Activated CD4-positive, alpha-beta T cell treated with anti-CD3 and anti-CD28 coated beads for 36 hours (primary cell): ENCODE measurements at regions of chr6 and their contacts with region 1.

Region 1: GRCh38 chr6:130047088-130047995 is 29.0 kb downstream of the L3MBTL3 start:
- DNase-seq: no peak
- ATAC-seq: no peak
- H3K4me3 Mint-ChIP-seq: no peak overlapping the region
- H3K27ac Mint-ChIP-seq: no peak overlapping the region
- H3K4me1 Mint-ChIP-seq: no peaks in the 10 kb centered on the region
- H3K27me3 Mint-ChIP-seq: no peaks in the 10 kb centered on the region

Region 2: DNA sequence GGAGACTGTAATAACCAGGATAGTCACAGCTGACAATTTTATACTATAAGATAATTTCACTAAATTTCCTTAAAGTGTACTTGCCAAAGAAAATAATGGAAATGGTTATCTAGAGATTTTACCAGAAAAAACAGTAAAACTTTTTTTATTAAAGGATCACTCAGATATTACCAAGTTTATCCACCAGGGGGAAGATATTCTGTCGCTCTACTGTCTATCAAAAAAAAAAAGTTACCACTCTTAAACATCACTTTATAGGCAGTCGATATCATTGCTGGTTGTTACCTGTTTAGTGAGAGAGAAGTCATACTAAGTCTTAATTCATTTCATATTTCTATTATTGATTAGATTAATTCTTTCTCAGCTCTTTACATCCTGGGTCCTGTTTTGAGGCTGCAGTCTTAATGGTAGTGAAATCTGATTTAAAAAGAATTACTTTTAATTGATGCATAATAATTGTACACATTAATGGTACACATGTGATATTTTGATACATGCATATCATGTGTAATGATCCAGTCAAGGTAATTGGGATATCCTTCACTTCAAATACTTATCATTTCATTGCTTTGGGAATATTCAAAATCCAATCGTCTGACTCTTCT is 10.0 kb before region 1 on chr6:
- CTCF ChIA-PET with region 1: interaction called, 10 read pairs
- POLR2A ChIA-PET with region 1: no interaction called
- intact Hi-C with region 1: no loop called
- DNase-seq: no peak
- ATAC-seq: no peak
- H3K4me3 Mint-ChIP-seq: no peak overlapping the region
- H3K27ac Mint-ChIP-seq: no peak overlapping the region
- H3K4me1 Mint-ChIP-seq: peaks cover 41% of the 10 kb centered on the region
- H3K27me3 Mint-ChIP-seq: no peaks in the 10 kb centered on the region

Region 3: GRCh38 chr6:130116273-130116672 is 68.9 kb after region 1 on chr6:
- CTCF ChIA-PET with region 1: no interaction called
- POLR2A ChIA-PET with region 1: no interaction called
- intact Hi-C with region 1: no loop called
- DNase-seq: no peak
- ATAC-seq: no peak
- H3K4me3 Mint-ChIP-seq: no peak overlapping the region
- H3K27ac Mint-ChIP-seq: no peak overlapping the region
- H3K4me1 Mint-ChIP-seq: peaks cover 16% of the 10 kb centered on the region
- H3K27me3 Mint-ChIP-seq: no peaks in the 10 kb centered on the region

Region 4: DNA sequence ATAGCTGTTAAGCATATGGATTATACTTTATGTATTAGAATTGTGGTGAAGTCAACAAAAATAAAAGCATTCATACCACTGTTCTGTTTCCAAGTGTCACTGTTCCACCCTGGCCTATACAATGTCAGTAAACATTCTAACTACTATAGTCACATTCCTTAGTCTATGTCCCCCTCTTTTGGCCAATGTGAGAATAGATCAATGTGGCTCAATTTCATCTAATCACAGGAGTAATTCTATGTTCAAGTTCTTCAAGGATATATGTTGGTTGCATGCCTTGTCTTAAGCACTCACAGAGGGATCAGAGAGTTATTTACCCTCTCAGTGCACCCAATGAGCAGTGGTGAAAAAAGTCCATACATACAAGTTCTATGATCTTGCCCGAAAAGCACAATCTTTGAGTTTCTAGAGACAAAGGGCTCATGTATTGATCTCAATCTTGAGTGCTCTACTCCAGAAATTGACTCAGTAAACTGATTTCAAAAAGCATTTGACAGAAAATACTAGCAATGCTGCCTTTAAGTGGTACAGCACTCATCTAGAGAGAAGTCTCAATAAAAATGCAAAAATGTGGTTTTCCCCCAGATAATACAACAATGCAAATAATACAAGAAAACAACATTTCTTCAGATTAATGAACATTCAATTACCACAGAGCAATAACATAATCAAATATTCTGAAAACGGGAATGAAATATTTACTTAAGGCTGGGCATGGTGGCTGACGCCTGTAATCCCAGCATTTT is 796.4 kb after region 1 on chr6:
- CTCF ChIA-PET with region 1: no interaction called
- POLR2A ChIA-PET with region 1: no interaction called
- intact Hi-C with region 1: loop called in 1 of 2 experiments (anchors 10 kb)
- DNase-seq: no peak
- ATAC-seq: peak; percentile 60
- H3K4me3 Mint-ChIP-seq: no peak overlapping the region
- H3K27ac Mint-ChIP-seq: no peak overlapping the region
- H3K4me1 Mint-ChIP-seq: peaks cover 2% of the 10 kb centered on the region
- H3K27me3 Mint-ChIP-seq: no peaks in the 10 kb centered on the region